Activated CD4-positive, alpha-beta T cell treated with anti-CD3 and anti-CD28 coated beads for 36 hours (primary cell): ENCODE measurements at regions of chr14 and their contacts with region 1.

Region 1: GRCh38 chr14:67571272-67571850 is 28.7 kb downstream of the PIGH start:
- DNase-seq: peak; percentile 82
- ATAC-seq: peak; percentile 97
- H3K4me3 Mint-ChIP-seq: no peak overlapping the region
- H3K27ac Mint-ChIP-seq: no peak overlapping the region
- H3K4me1 Mint-ChIP-seq: no peaks in the 10 kb centered on the region
- H3K27me3 Mint-ChIP-seq: peaks cover 3% of the 10 kb centered on the region

Region 2: GRCh38 chr14:66359500-66359899 is 1211.9 kb before region 1 on chr14:
- CTCF ChIA-PET with region 1: interaction called, 3 read pairs
- POLR2A ChIA-PET with region 1: no interaction called
- intact Hi-C with region 1: loop called in 1 of 2 experiments (anchors 5 kb)
- DNase-seq: peak; percentile 23
- ATAC-seq: no peak
- H3K4me3 Mint-ChIP-seq: no peak overlapping the region
- H3K27ac Mint-ChIP-seq: no peak overlapping the region
- H3K4me1 Mint-ChIP-seq: no peaks in the 10 kb centered on the region
- H3K27me3 Mint-ChIP-seq: no peaks in the 10 kb centered on the region

Region 3: DNA sequence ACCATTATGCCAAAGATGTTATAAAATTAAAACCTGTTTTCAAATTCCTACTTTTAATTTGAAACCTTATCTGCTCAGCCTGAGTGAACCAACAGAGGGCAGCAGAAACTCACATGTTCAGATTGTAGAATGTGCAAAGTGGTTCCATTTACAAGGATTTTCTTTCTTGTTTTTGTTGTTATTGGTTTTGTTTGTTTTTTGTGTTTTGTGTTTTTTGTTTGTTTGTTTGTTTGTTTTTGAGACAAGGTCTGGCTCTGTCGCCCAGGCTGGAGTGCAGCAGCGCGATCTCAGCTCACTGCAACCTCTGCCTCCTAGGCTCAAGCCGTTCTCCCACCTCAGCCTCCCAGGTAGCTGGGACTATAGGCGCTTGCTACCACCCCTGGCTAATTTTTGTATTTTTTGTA is 404.9 kb before region 1 on chr14:
- CTCF ChIA-PET with region 1: no interaction called
- POLR2A ChIA-PET with region 1: no interaction called
- intact Hi-C with region 1: no loop called
- DNase-seq: peak; percentile 58
- ATAC-seq: no peak
- H3K4me3 Mint-ChIP-seq: no peak overlapping the region
- H3K27ac Mint-ChIP-seq: no peak overlapping the region
- H3K4me1 Mint-ChIP-seq: no peaks in the 10 kb centered on the region
- H3K27me3 Mint-ChIP-seq: no peaks in the 10 kb centered on the region

Region 4: GRCh38 chr14:67453575-67454300 is 117.6 kb before region 1 on chr14:
- CTCF ChIA-PET with region 1: interaction called, 10 read pairs
- POLR2A ChIA-PET with region 1: interaction called, 3 read pairs
- intact Hi-C with region 1: no loop called
- DNase-seq: no peak
- ATAC-seq: no peak
- H3K4me3 Mint-ChIP-seq: no peak overlapping the region
- H3K27ac Mint-ChIP-seq: no peak overlapping the region
- H3K4me1 Mint-ChIP-seq: no peaks in the 10 kb centered on the region
- H3K27me3 Mint-ChIP-seq: no peaks in the 10 kb centered on the region

Region 5: GRCh38 chr14:67532998-67533753 is 38.2 kb before region 1 on chr14 and contains the start of gene PLEKHH1:
- CTCF ChIA-PET with region 1: interaction called, 41 read pairs
- POLR2A ChIA-PET with region 1: no interaction called
- intact Hi-C with region 1: no loop called
- DNase-seq: peak; percentile 82
- ATAC-seq: peak; percentile 99
- H3K4me3 Mint-ChIP-seq: peak within 1 kb of the TSS; percentile 66
- H3K27ac Mint-ChIP-seq: no peak within 1 kb of the TSS
- H3K4me1 Mint-ChIP-seq: peaks cover 3% of the 10 kb centered on the region
- H3K27me3 Mint-ChIP-seq: peaks cover 17% of the 10 kb centered on the region
- total RNA-seq, gene PLEKHH1: 4.1 to 5.7 TPM

Region 6: GRCh38 chr14:67583711-67584644 is 12.6 kb after region 1 on chr14:
- CTCF ChIA-PET with region 1: interaction called, 49 read pairs
- POLR2A ChIA-PET with region 1: no interaction called
- intact Hi-C with region 1: no loop called
- DNase-seq: peak; percentile 43
- ATAC-seq: peak; percentile 78
- H3K4me3 Mint-ChIP-seq: no peak overlapping the region
- H3K27ac Mint-ChIP-seq: no peak overlapping the region
- H3K4me1 Mint-ChIP-seq: no peaks in the 10 kb centered on the region
- H3K27me3 Mint-ChIP-seq: no peaks in the 10 kb centered on the region

Region 7: GRCh38 chr14:67722293-67722692 is 150.9 kb after region 1 on chr14:
- CTCF ChIA-PET with region 1: interaction called, 10 read pairs
- POLR2A ChIA-PET with region 1: no interaction called
- intact Hi-C with region 1: no loop called
- DNase-seq: peak; percentile 10
- ATAC-seq: peak; percentile 39
- H3K4me3 Mint-ChIP-seq: no peak overlapping the region
- H3K27ac Mint-ChIP-seq: no peak overlapping the region
- H3K4me1 Mint-ChIP-seq: peaks cover 7% of the 10 kb centered on the region
- H3K27me3 Mint-ChIP-seq: peaks cover 35% of the 10 kb centered on the region